Tibial artery (tissue), 4 donors: ENCODE measurements at regions of chr10 and their contacts with region 1.

Region 1: DNA sequence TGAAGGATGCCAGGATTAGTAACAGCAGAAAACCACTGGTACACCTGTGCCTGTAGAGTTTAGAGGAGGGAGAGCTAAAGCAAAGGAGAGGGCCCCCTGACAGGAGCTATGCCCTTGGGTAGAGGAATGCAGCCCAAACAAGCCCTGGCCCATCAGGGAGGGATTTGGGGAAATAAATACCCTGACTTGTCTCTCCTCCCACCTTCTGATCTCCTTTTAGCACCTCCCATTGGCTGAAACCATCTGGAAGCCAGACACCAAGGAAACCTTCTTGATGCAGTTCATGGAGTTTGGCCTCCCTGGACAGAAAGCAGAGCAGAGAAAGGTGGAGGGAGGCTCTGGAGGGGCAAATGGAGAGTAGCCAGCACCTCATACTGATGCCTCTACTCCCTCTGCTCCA is 45.3 kb downstream of the ADRA2A start:
- DNase-seq: peak in 1 of 2 donors; percentile 16
- H3K4me3 ChIP-seq: no peak overlapping the region
- H3K27ac ChIP-seq: no peak overlapping the region
- H3K4me1 ChIP-seq: no peaks in the 10 kb centered on the region
- H3K27me3 ChIP-seq: no peaks in the 10 kb centered on the region
- CTCF ChIP-seq: no peak

Region 2: GRCh38 chr10:111037864-111038263 is 84.3 kb before region 1 on chr10:
- intact Hi-C with region 1: no loop called
- DNase-seq: no peak
- H3K4me3 ChIP-seq: no peak overlapping the region
- H3K27ac ChIP-seq: no peak overlapping the region
- H3K4me1 ChIP-seq: peaks cover 0 to 5% (median 0%) of the 10 kb centered on the region in 4 donors
- H3K27me3 ChIP-seq: no peaks in the 10 kb centered on the region
- CTCF ChIP-seq: no peak

Region 3: DNA sequence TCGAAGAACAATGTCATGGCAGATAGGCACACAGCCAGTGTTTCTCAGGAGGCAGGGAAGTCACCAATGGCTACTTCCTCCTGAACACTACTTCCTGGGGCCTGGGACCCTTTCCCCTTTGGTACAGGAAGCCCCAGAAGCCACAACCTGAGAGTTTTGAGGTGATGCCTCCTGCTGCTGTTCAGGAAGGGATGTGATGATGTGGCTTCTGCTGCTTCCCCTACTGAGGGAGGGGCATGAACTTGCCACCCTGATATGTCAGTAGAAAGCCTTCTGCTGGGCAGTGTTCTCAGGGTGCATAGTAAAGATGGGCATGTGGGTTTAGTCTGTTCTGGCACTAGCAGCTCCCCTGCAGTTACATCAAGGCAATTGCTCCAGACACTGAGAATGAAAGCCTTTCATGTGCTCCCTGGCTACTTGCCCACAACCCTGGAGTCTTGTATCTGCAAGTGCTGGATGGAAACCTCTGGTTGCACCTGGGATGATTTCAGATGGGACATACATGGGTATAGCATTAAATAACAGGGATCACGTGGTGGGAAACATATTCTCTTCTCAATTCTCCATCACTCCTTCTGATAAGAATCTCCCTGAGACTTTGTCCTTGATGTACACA is 24.0 kb after region 1 on chr10:
- intact Hi-C with region 1: loop called (anchors 2 kb)
- DNase-seq: no peak
- H3K4me3 ChIP-seq: no peak overlapping the region
- H3K27ac ChIP-seq: no peak overlapping the region
- H3K4me1 ChIP-seq: no peaks in the 10 kb centered on the region
- H3K27me3 ChIP-seq: peaks cover 0 to 6% of the 10 kb centered on the region in 2 donors
- CTCF ChIP-seq: no peak